HCT116 (cell line): ENCODE measurements at regions of chr2 and their contacts with region 1.

Region 1: DNA sequence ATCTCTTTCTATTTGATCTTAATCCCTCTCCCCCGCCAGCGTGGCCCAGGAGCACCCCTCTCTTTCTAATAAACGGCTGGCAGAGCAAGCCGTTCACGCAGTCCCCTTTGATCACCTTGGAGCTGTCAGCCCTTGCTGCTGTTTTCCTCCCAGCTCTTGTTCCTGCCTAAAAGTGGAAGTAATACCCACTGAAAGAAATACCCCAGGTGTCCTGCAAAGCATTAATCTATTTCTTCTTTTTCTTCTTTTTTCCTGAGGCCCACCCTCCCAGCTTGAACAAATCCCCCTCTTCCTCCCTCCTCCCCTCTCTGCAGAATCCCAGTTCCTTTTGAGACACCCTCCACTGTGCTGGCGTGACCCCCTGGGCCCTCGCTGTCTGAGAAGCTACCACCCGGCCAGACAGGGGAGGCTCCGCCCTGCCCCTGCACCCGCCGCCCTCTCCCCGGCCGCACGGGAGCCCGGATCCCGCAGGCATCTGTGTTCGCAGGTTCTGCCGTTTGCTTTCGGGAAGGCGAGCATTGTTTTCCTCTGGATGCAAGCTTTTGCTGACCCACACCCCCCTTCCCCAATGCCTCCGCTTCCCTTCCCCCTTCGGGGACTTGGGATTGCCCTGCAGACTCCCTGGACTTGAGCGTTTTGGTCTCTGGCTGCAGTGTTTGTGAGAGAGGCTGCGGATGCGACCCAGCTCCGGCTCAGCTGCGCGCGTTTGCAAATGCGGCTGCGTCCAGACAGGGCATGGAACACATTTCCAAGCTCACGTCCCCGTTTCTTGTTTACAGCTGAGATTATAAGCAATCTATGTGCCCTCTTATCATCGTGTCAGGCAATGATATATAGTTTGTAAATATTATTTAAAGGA is 631.5 kb downstream of the NYAP2 start:
- DNase-seq: peak; percentile 65
- ATAC-seq: peak; percentile 92
- H3K4me3 ChIP-seq: peak overlapping the region; percentile 48 to 65
- H3K27ac ChIP-seq: peak overlapping the region; percentile 86
- H3K4me1 ChIP-seq: peaks cover 38 to 49% of the 10 kb centered on the region in 2 experiments
- H3K27me3 ChIP-seq: no peaks in the 10 kb centered on the region
- CTCF ChIP-seq: no peak
- POLR2A ChIP-seq: no peak
- RAD21 ChIP-seq: no peak

Region 2: DNA sequence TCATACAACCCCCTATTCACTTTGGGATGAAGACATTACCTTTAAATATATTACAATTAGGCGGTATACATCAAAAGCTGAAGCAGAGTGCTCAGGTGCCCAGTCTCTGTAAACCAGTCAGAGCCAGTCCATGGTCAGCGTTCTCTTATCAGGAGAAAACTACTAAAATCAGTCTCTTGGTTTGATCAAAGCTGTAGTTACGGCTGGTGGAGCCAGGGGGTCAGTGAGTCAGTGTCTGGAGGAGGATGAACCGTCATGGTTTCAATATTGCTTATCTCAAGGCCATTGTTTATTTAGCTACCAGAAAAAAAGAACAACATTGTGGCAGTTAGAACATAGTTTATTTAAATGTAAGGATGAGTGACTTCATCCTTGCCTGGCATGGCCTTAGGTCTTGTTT is 702.9 kb before region 1 on chr2:
- CTCF ChIA-PET with region 1: no interaction called
- POLR2A ChIA-PET with region 1: no interaction called
- RAD21 ChIA-PET with region 1: no interaction called
- intact Hi-C with region 1: no loop called
- DNase-seq: no peak
- ATAC-seq: no peak; the same call in 1 of the 2 replicates
- H3K4me3 ChIP-seq: no peak overlapping the region
- H3K27ac ChIP-seq: no peak overlapping the region
- H3K4me1 ChIP-seq: no peaks in the 10 kb centered on the region
- H3K27me3 ChIP-seq: no peaks in the 10 kb centered on the region
- CTCF ChIP-seq: no peak
- POLR2A ChIP-seq: no peak
- RAD21 ChIP-seq: no peak

Region 3: GRCh38 chr2:225668606-225669266 is 362.3 kb before region 1 on chr2:
- CTCF ChIA-PET with region 1: no interaction called
- POLR2A ChIA-PET with region 1: no interaction called
- RAD21 ChIA-PET with region 1: no interaction called
- intact Hi-C with region 1: loop called (anchors 10 kb)
- DNase-seq: peak; percentile 72
- ATAC-seq: peak; percentile 79
- H3K4me3 ChIP-seq: no peak overlapping the region
- H3K27ac ChIP-seq: peak overlapping the region; percentile 67; the same call in 1 of the 2 replicates
- H3K4me1 ChIP-seq: peaks cover 21 to 32% of the 10 kb centered on the region in 2 experiments
- H3K27me3 ChIP-seq: no peaks in the 10 kb centered on the region
- CTCF ChIP-seq: peak; percentile 74 to 91 (median 80)
- POLR2A ChIP-seq: no peak
- RAD21 ChIP-seq: peak; percentile 86

Region 4: DNA sequence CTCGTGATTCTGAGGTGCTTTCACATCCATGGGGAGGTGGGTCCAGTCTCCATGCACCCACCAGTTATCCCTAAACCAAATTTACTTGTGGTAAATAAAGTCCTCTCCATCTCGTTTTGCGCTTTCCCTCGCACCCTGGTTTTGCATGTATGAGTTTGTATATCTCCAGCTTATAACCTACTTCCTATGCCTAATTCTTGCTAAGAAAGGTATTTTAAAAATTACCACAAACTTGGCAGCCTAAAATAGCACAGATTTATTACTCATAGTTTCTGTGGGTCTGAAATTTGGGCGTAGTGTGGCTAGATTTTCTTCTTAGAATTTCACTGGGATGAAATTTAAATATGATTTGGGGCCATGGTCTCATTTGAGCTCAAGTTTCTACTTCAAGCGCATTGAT is 120.0 kb before region 1 on chr2:
- CTCF ChIA-PET with region 1: no interaction called
- POLR2A ChIA-PET with region 1: no interaction called
- RAD21 ChIA-PET with region 1: no interaction called
- intact Hi-C with region 1: no loop called
- DNase-seq: no peak
- ATAC-seq: no peak
- H3K4me3 ChIP-seq: no peak overlapping the region
- H3K27ac ChIP-seq: no peak overlapping the region
- H3K4me1 ChIP-seq: no peaks in the 10 kb centered on the region
- H3K27me3 ChIP-seq: no peaks in the 10 kb centered on the region
- CTCF ChIP-seq: no peak
- POLR2A ChIP-seq: no peak
- RAD21 ChIP-seq: no peak

Region 5: DNA sequence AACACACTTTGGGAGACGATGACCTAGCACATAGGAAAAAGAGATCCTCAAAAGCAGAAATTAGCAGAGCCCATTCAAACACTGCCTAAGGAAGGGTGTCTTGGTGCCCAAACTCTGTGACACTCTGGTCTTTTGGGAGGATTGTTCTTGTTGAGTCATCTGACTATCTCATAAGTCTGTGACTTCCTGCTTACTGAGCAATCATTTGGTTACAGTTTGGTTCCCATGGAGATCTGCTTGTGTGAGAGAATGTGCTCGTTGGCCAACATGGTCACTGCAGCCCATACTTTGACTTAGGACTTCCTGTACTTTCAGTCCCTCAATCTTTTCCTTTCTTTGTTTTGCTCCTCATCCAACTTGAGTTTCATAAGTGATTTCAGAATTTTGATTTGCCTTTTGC is 28.6 kb before region 1 on chr2:
- CTCF ChIA-PET with region 1: no interaction called
- POLR2A ChIA-PET with region 1: no interaction called
- RAD21 ChIA-PET with region 1: no interaction called
- intact Hi-C with region 1: no loop called
- DNase-seq: peak; percentile 46
- ATAC-seq: no peak
- H3K4me3 ChIP-seq: no peak overlapping the region
- H3K27ac ChIP-seq: no peak overlapping the region
- H3K4me1 ChIP-seq: peaks cover 0 to 17% of the 10 kb centered on the region in 2 experiments; a peak in 2 of 4 replicates
- H3K27me3 ChIP-seq: no peaks in the 10 kb centered on the region
- CTCF ChIP-seq: no peak
- POLR2A ChIP-seq: no peak
- RAD21 ChIP-seq: no peak

Region 6: GRCh38 chr2:226048611-226049010 is 17.6 kb after region 1 on chr2:
- CTCF ChIA-PET with region 1: no interaction called
- POLR2A ChIA-PET with region 1: interaction called, 11 read pairs
- RAD21 ChIA-PET with region 1: no interaction called
- intact Hi-C with region 1: no loop called
- DNase-seq: peak; percentile 78
- ATAC-seq: peak; percentile 78
- H3K4me3 ChIP-seq: peak overlapping the region in 1 of 2 experiments; percentile 28; a peak in 2 of 4 replicates
- H3K27ac ChIP-seq: peak overlapping the region; percentile 83
- H3K4me1 ChIP-seq: peaks cover 69 to 79% of the 10 kb centered on the region in 2 experiments
- H3K27me3 ChIP-seq: no peaks in the 10 kb centered on the region
- CTCF ChIP-seq: no peak
- POLR2A ChIP-seq: no peak
- RAD21 ChIP-seq: no peak

Region 7: GRCh38 chr2:226137201-226137811 is 106.3 kb after region 1 on chr2:
- CTCF ChIA-PET with region 1: no interaction called
- POLR2A ChIA-PET with region 1: no interaction called
- RAD21 ChIA-PET with region 1: no interaction called
- intact Hi-C with region 1: no loop called
- DNase-seq: no peak
- ATAC-seq: peak; percentile 58
- H3K4me3 ChIP-seq: no peak overlapping the region
- H3K27ac ChIP-seq: peak overlapping the region; percentile 93
- H3K4me1 ChIP-seq: peaks cover 36 to 67% of the 10 kb centered on the region in 2 experiments
- H3K27me3 ChIP-seq: no peaks in the 10 kb centered on the region
- CTCF ChIP-seq: no peak
- POLR2A ChIP-seq: no peak
- RAD21 ChIP-seq: no peak

Region 8: GRCh38 chr2:226185616-226186211 is 154.7 kb after region 1 on chr2:
- CTCF ChIA-PET with region 1: no interaction called
- POLR2A ChIA-PET with region 1: no interaction called
- RAD21 ChIA-PET with region 1: no interaction called
- intact Hi-C with region 1: loop called (anchors 10 kb)
- DNase-seq: peak; percentile 84
- ATAC-seq: peak; percentile 68
- H3K4me3 ChIP-seq: peak overlapping the region; percentile 22 to 45; a peak in 3 of 4 replicates
- H3K27ac ChIP-seq: peak overlapping the region; percentile 95
- H3K4me1 ChIP-seq: peaks cover 82 to 100% of the 10 kb centered on the region in 2 experiments
- H3K27me3 ChIP-seq: no peaks in the 10 kb centered on the region
- CTCF ChIP-seq: peak in 1 of 3 experiments; percentile 14; a peak in 2 of 6 replicates
- POLR2A ChIP-seq: no peak
- RAD21 ChIP-seq: peak; percentile 40